Activated CD4-positive, alpha-beta T cell treated with anti-CD3 and anti-CD28 coated beads for 36 hours (primary cell): ENCODE measurements at regions of chr10 and their contacts with region 1.

Region 1: DNA sequence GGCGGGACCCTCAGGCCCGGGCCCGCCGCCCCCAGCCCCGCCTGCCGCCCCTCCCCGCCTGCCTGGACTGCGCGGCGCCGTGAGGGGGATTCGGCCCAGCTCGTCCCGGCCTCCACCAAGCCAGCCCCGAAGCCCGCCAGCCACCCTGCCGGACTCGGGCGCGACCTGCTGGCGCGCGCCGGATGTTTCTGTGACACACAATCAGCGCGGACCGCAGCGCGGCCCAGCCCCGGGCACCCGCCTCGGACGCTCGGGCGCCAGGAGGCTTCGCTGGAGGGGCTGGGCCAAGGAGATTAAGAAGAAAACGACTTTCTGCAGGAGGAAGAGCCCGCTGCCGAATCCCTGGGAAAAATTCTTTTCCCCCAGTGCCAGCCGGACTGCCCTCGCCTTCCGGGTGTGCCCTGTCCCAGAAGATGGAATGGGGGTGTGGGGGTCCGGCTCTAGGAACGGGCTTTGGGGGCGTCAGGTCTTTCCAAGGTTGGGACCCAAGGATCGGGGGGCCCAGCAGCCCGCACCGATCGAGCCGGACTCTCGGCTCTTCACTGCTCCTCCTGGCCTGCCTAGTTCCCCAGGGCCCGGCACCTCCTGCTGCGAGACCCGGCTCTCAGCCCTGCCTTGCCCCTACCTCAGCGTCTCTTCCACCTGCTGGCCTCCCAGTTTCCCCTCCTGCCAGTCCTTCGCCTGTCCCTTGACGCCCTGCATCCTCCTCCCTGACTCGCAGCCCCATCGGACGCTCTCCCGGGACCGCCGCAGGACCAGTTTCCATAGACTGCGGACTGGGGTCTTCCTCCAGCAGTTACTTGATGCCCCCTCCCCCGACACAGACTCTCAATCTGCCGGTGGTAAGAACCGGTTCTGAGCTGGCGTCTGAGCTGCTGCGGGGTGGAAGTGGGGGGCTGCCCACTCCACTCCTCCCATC is 82.7 kb downstream of the PAX2 start:
- DNase-seq: peak; percentile 62
- ATAC-seq: peak; percentile 48
- H3K4me3 Mint-ChIP-seq: peak overlapping the region; percentile 70
- H3K27ac Mint-ChIP-seq: no peak overlapping the region
- H3K4me1 Mint-ChIP-seq: peaks cover 24% of the 10 kb centered on the region
- H3K27me3 Mint-ChIP-seq: peaks cover 66% of the 10 kb centered on the region

Region 2: DNA sequence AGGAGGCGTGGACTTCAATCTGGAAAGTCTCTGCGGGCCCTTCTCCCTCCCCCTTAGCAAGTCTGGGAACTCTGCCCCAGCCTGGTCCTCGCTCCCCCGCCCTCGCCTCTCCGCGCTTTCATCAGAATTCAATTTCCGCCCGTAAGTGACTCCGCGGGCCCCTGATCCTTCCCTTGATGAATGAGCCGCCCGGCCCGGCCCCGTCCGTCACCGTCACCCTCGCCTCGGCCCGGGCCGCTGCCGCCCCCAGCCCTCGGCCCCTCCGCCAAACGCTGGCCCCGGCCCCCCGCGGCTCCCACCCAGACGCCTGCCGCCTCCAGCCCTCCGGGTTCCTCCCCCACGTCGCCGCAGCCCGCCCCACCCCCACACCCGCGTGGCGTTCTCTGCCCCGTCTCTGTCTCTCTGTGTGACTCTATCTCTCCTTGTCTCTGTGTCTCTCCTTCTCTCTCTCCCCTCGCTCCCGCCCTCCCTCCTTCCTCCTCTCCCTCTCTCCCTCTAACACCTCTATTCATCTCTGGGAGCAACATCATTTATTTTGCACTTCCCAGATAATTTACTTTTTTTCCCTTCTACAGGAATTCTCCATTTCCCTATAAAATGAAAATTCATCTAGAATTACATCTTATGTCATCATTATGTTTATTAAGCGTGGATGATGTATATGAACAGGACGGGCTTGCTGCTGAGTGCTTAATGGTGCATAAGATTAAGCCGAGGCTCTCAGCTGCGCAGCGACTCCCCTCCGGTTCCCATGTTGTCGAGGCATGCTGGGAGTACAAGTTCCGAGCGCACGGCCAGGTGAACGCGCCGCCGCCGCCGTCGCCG is 173.9 kb before region 1 on chr10:
- CTCF ChIA-PET with region 1: no interaction called
- POLR2A ChIA-PET with region 1: no interaction called
- intact Hi-C with region 1: loop called in 1 of 2 experiments (anchors 2 kb)
- DNase-seq: peak; percentile 72
- ATAC-seq: peak; percentile 48
- H3K4me3 Mint-ChIP-seq: peak overlapping the region; percentile 62
- H3K27ac Mint-ChIP-seq: peak overlapping the region; percentile 12
- H3K4me1 Mint-ChIP-seq: peaks cover 20% of the 10 kb centered on the region
- H3K27me3 Mint-ChIP-seq: peaks cover 58% of the 10 kb centered on the region

Region 3: DNA sequence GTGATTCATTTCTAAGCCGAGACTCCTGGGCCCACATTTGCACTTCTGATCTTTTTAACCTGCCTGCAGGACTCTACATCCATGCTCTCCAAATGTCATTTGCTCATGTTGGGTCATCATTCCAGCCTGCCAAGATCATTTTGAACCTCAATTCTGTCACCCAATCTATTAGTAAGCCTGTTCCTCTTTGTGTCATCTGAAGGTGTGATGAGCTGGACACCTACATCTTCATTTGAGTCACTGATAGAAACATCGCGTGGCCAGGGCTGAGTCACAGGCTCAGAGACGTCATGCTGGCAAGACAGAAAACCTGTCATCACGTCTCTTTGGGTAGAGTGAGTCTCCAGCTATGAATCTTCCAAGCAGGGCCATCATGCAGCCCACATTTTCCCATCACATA is 19.4 kb after region 1 on chr10:
- CTCF ChIA-PET with region 1: no interaction called
- POLR2A ChIA-PET with region 1: no interaction called
- intact Hi-C with region 1: loop called in 1 of 2 experiments (anchors 1 kb)
- DNase-seq: peak; percentile 90
- ATAC-seq: peak; percentile 94
- H3K4me3 Mint-ChIP-seq: no peak overlapping the region
- H3K27ac Mint-ChIP-seq: peak overlapping the region; percentile 85
- H3K4me1 Mint-ChIP-seq: peaks cover 31% of the 10 kb centered on the region
- H3K27me3 Mint-ChIP-seq: peaks cover 46% of the 10 kb centered on the region

Region 4: DNA sequence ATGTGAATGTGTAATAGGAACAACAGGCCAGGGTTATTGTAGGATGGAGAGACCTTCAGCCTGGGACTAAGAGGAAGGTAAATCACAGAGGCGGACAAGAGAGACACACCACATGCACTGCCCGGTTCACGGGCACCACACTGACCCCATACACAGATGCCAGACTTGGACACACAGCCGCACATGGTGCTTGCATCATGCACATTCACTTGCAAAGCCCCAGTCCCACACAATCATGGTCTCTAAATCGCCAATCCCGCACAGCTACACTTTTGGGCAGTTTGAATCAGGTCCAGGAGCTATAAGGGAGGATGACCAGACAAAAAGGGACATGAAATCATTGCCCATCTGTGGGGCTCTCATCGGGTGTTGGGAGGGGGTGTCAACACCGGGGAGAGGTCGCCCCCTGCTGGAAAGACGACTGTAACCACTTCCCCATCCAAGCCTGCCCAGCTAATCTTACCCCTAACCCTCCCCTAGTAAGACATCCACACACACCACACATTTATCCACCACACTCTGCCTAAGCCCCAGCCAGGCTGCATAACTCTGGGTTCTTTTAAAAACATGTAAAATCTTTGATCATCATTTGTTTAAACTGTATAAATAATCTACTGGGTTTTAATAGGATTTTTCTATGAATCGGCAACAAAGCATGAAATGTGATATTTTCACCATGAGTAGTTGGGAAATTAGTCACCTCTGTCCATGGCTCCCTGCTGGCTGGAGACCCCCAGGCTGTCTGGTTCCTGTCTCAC is 44.1 kb after region 1 on chr10:
- CTCF ChIA-PET with region 1: interaction called, 3 read pairs
- POLR2A ChIA-PET with region 1: no interaction called
- intact Hi-C with region 1: loop called (anchors 2 to 5 kb)
- DNase-seq: peak; percentile 89
- ATAC-seq: peak; percentile 97
- H3K4me3 Mint-ChIP-seq: no peak overlapping the region
- H3K27ac Mint-ChIP-seq: no peak overlapping the region
- H3K4me1 Mint-ChIP-seq: no peaks in the 10 kb centered on the region
- H3K27me3 Mint-ChIP-seq: peaks cover 9% of the 10 kb centered on the region